ENCODE measurements at regions of chr10 and their contacts with region 1.

Region 1: GRCh38 chr10:97686962-97687784 is at the start of gene AVPI1:
- DNase-seq: peak; percentile 96 to 97 (median 97)
- H3K4me3 ChIP-seq: peak within 1 kb of the TSS; percentile 86 to 87
- H3K4me3 Mint-ChIP-seq: peak within 1 kb of the TSS; percentile 84 to 92 (median 88)
- H3K27ac ChIP-seq: peak within 1 kb of the TSS; percentile 71
- H3K27ac Mint-ChIP-seq: peak within 1 kb of the TSS; percentile 64 to 96 (median 92)
- H3K4me1 ChIP-seq: peaks cover 29% of the 10 kb centered on the region
- H3K4me1 Mint-ChIP-seq: peaks cover 5 to 15% (median 10%) of the 10 kb centered on the region in 4 donors
- H3K27me3 ChIP-seq: no peaks in the 10 kb centered on the region
- H3K27me3 Mint-ChIP-seq: no peaks in the 10 kb centered on the region
- total RNA-seq, gene AVPI1: 1.9 to 2.2 TPM

Region 2: DNA sequence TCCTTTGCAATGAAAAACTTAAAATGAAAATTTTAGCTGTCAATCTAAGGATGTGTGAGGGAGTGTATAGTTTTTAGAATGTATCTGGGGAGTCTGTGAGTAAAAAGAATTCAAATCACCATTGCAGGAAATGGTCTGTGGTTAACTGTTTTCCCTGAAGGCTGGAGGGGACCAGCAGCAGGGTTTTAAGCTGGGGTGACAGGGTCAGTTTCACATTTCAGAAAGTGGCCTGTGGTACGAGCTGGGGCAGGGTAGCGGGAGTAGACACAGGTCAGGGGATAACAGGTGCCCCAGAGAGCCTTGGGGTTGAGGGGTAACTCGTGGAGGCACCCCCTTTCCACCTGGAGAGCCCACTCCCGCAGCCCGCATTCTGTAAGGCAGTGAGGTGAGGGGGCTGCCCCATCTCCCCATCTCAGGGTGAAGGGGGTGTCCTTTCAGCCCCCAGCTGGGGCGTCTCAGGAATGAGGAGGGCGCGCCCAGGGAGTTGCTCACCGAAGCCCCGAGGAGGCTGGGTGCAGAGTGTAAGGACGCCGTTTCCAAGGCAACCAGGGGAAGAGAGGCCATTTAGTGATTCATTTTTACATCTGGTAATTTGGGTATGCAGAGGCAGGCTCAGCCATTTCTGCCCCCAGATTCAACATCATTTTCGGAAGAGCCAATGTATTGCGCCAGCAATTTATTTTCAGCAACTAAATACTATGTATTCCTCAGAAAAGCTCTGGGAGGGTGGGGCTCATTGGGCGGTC is 670.3 kb before region 1 on chr10:
- CTCF ChIA-PET with region 1: no interaction called
- POLR2A ChIA-PET with region 1: no interaction called
- intact Hi-C with region 1: no loop called
- DNase-seq: no peak
- H3K4me3 ChIP-seq: no peak overlapping the region
- H3K4me3 Mint-ChIP-seq: peak overlapping the region in 2 of 8 donors; percentile 6 to 73
- H3K27ac ChIP-seq: no peak overlapping the region
- H3K27ac Mint-ChIP-seq: peak overlapping the region in 4 of 7 donors; percentile 53 to 83 (median 76)
- H3K4me1 ChIP-seq: no peaks in the 10 kb centered on the region
- H3K4me1 Mint-ChIP-seq: peaks cover 3 to 10% (median 4%) of the 10 kb centered on the region in 4 donors
- H3K27me3 ChIP-seq: no peaks in the 10 kb centered on the region
- H3K27me3 Mint-ChIP-seq: no peaks in the 10 kb centered on the region

Region 3: GRCh38 chr10:97640174-97640867 is 46.9 kb before region 1 on chr10 and contains the start of gene PI4K2A:
- CTCF ChIA-PET with region 1: no interaction called
- POLR2A ChIA-PET with region 1: interaction called, 23 read pairs
- intact Hi-C with region 1: loop called (anchors 1 kb)
- DNase-seq: peak; percentile 98 to 99 (median 98)
- H3K4me3 ChIP-seq: peak within 1 kb of the TSS; percentile 83 to 97
- H3K4me3 Mint-ChIP-seq: peak within 1 kb of the TSS; percentile 94 to 99 (median 97)
- H3K27ac ChIP-seq: peak within 1 kb of the TSS; percentile 68
- H3K27ac Mint-ChIP-seq: peak within 1 kb of the TSS; percentile 84 to 97 (median 91)
- H3K4me1 ChIP-seq: peaks cover 15% of the 10 kb centered on the region
- H3K4me1 Mint-ChIP-seq: peaks cover 17 to 28% (median 21%) of the 10 kb centered on the region in 4 donors
- H3K27me3 ChIP-seq: no peaks in the 10 kb centered on the region
- H3K27me3 Mint-ChIP-seq: no peaks in the 10 kb centered on the region
- total RNA-seq, gene PI4K2A: 9.8 to 9.9 TPM

Region 4: GRCh38 chr10:97701438-97702069 is 14.4 kb after region 1 on chr10:
- CTCF ChIA-PET with region 1: interaction called, 118 read pairs
- POLR2A ChIA-PET with region 1: interaction called, 4 read pairs
- intact Hi-C with region 1: no loop called
- DNase-seq: peak; percentile 56 to 65 (median 64)
- H3K4me3 ChIP-seq: no peak overlapping the region
- H3K4me3 Mint-ChIP-seq: no peak overlapping the region
- H3K27ac ChIP-seq: no peak overlapping the region
- H3K27ac Mint-ChIP-seq: no peak overlapping the region
- H3K4me1 ChIP-seq: no peaks in the 10 kb centered on the region
- H3K4me1 Mint-ChIP-seq: no peaks in the 10 kb centered on the region
- H3K27me3 ChIP-seq: no peaks in the 10 kb centered on the region
- H3K27me3 Mint-ChIP-seq: peaks cover 8 to 10% of the 10 kb centered on the region in 2 donors

Region 5: GRCh38 chr10:97736902-97737769 is 50.0 kb after region 1 on chr10 and contains the start of gene ZFYVE27:
- CTCF ChIA-PET with region 1: interaction called, 81 read pairs
- POLR2A ChIA-PET with region 1: interaction called, 41 read pairs
- intact Hi-C with region 1: loop called (anchors 2 kb)
- DNase-seq: peak; percentile 93 to 94 (median 93)
- H3K4me3 ChIP-seq: peak within 1 kb of the TSS; percentile 86 to 87
- H3K4me3 Mint-ChIP-seq: peak within 1 kb of the TSS; percentile 96 to 99 (median 98)
- H3K27ac ChIP-seq: peak within 1 kb of the TSS; percentile 92
- H3K27ac Mint-ChIP-seq: peak within 1 kb of the TSS; percentile 94 to 99 (median 98)
- H3K4me1 ChIP-seq: peaks cover 41% of the 10 kb centered on the region
- H3K4me1 Mint-ChIP-seq: peaks cover 38 to 61% (median 50%) of the 10 kb centered on the region in 4 donors
- H3K27me3 ChIP-seq: no peaks in the 10 kb centered on the region
- H3K27me3 Mint-ChIP-seq: no peaks in the 10 kb centered on the region
- total RNA-seq, gene ZFYVE27: 59.5 to 64.5 TPM

Region 6: GRCh38 chr10:97752956-97753355 is 65.8 kb after region 1 on chr10:
- CTCF ChIA-PET with region 1: no interaction called
- POLR2A ChIA-PET with region 1: no interaction called
- intact Hi-C with region 1: no loop called
- DNase-seq: no peak
- H3K4me3 ChIP-seq: no peak overlapping the region
- H3K4me3 Mint-ChIP-seq: no peak overlapping the region
- H3K27ac ChIP-seq: no peak overlapping the region
- H3K27ac Mint-ChIP-seq: no peak overlapping the region
- H3K4me1 ChIP-seq: no peaks in the 10 kb centered on the region
- H3K4me1 Mint-ChIP-seq: peaks cover 0 to 2% (median 0%) of the 10 kb centered on the region in 4 donors
- H3K27me3 ChIP-seq: no peaks in the 10 kb centered on the region
- H3K27me3 Mint-ChIP-seq: no peaks in the 10 kb centered on the region

Region 7: GRCh38 chr10:98016772-98017475 is 329.8 kb after region 1 on chr10:
- CTCF ChIA-PET with region 1: no interaction called
- POLR2A ChIA-PET with region 1: no interaction called
- intact Hi-C with region 1: no loop called
- DNase-seq: no peak
- H3K4me3 ChIP-seq: no peak overlapping the region
- H3K4me3 Mint-ChIP-seq: no peak overlapping the region
- H3K27ac ChIP-seq: no peak overlapping the region
- H3K27ac Mint-ChIP-seq: no peak overlapping the region
- H3K4me1 ChIP-seq: no peaks in the 10 kb centered on the region
- H3K4me1 Mint-ChIP-seq: no peaks in the 10 kb centered on the region
- H3K27me3 ChIP-seq: no peaks in the 10 kb centered on the region
- H3K27me3 Mint-ChIP-seq: peaks cover 10 to 22% of the 10 kb centered on the region in 2 donors

Measured in CD4-positive, alpha-beta memory T cell (primary cell).